Panc1 (cell line): ENCODE measurements at regions of chr1 and their contacts with region 1.

Region 1: DNA sequence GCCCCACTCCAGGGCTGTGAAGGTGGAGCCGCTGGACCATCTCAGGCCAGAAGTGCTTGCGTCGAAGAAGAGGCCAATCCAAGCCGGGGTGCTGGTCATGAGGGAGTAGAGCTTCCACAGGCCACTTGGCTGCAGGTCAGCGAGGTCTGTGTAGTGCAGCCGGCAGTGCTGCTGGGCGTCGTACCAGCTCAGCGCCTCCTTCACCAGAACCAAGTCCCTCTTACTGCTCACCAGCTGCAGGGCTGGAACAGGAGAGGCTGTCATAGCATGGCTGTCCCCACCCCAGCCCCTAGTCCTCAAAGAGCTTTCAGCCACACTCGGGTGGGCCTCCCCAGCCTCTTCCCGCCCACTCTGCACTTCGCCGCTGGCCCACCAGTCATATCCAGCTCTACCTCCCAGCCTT is 2.2 kb downstream of the CLEC20A start:
- DNase-seq: no peak
- ATAC-seq: no peak
- H3K4me3 ChIP-seq: no peak overlapping the region
- H3K27ac ChIP-seq: no peak overlapping the region
- H3K4me1 ChIP-seq: no peaks in the 10 kb centered on the region
- H3K27me3 ChIP-seq: no peaks in the 10 kb centered on the region
- CTCF ChIP-seq: no peak

Region 2: DNA sequence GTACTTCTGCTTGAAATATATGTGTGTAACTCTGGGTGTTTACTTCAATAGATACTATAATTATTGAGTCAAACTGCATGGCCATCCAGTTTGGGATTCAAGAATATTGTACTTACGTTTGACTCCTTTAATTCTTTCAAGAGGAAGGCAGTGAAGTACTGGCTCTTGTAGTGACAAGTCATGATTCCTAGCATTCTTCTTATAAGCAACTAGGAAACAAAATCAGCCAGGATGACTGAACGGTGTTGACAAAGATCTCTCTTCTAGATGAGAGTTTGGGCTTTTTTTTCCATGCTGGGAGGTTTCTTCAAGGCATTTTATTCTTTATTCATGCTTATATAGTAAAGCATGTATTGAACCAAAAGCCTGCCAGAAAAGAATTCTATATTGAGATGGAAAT is 56.1 kb before region 1 on chr1:
- CTCF ChIA-PET with region 1: no interaction called
- POLR2A ChIA-PET with region 1: interaction called, 11 read pairs
- in situ Hi-C with region 1: no loop called
- intact Hi-C with region 1: no loop called
- DNase-seq: no peak
- ATAC-seq: no peak
- H3K4me3 ChIP-seq: no peak overlapping the region
- H3K27ac ChIP-seq: no peak overlapping the region
- H3K4me1 ChIP-seq: no peaks in the 10 kb centered on the region
- H3K27me3 ChIP-seq: no peaks in the 10 kb centered on the region
- CTCF ChIP-seq: no peak

Region 3: DNA sequence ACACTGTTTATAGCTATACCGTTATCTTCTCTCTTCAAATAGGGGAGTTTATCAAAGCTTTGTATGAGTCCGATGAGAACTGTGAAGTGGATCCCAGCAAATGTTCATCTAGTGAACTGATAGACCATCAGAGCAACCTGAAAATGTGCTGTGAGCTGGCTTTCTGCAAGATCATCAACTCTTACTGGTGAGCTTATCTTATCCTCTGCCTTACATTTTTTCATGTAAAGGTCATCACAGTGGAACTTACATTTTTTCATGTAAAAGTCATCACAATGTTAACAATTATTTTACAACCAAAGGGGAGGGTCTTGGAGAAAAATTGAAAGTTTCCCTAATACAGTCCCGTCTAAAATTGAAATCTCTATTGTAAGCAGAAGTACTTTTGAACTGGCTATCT is 43.0 kb before region 1 on chr1:
- CTCF ChIA-PET with region 1: no interaction called
- POLR2A ChIA-PET with region 1: interaction called, 18 read pairs
- in situ Hi-C with region 1: no loop called
- intact Hi-C with region 1: no loop called
- DNase-seq: no peak
- ATAC-seq: no peak
- H3K4me3 ChIP-seq: no peak overlapping the region
- H3K27ac ChIP-seq: no peak overlapping the region
- H3K4me1 ChIP-seq: no peaks in the 10 kb centered on the region
- H3K27me3 ChIP-seq: no peaks in the 10 kb centered on the region
- CTCF ChIP-seq: no peak

Region 4: DNA sequence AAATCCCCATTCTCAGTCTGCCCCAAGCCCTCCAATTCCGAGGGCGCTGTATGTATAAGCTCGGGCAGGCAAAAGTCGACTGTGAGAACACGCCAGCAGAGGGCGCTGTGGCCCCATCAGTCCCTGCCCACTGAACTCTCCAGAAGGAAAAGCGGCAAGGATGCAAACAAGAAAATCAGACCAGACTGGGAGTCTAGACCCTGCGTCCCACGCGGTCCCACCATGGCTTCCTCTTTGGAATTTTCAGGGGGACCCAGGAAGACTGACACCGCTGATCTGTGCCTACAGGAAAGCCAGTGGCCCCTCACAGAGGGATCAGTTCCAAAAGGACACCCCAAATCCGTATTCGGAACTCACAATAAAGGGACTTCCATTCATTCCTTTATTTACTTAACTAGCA is 37.8 kb after region 1 on chr1:
- CTCF ChIA-PET with region 1: no interaction called
- POLR2A ChIA-PET with region 1: no interaction called
- in situ Hi-C with region 1: no loop called
- intact Hi-C with region 1: no loop called
- DNase-seq: no peak
- ATAC-seq: peak; percentile 78
- H3K4me3 ChIP-seq: no peak overlapping the region
- H3K27ac ChIP-seq: no peak overlapping the region
- H3K4me1 ChIP-seq: peaks cover 14% of the 10 kb centered on the region
- H3K27me3 ChIP-seq: no peaks in the 10 kb centered on the region
- CTCF ChIP-seq: peak; percentile 96